K562 (cell line): ENCODE measurements at regions of chr11 and their contacts with region 1.

Region 1: DNA sequence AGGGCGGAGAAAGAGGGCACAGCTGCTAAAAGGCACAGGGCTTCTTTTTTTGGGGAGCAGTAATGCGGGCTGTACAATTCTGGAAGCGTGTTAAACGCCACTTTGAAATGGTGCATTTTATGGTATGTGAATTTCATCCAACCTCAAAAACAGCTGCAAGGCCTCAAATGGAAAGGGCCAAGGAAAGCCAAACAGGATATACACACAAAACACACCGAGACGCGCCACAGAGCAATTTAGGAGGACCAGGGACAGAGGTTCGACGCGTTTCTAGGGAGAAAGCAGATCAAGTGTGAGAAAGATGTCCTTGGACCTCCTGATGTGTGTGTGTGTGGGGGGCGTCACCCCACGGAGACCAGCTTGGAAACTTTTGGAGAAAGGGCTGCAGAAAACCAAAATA is 31.1 kb downstream of the TSPAN4 start:
- DNase-seq: no peak
- ATAC-seq: no peak
- H3K4me3 ChIP-seq: no peak overlapping the region
- H3K27ac ChIP-seq: no peak overlapping the region
- H3K4me1 ChIP-seq: peaks cover 29 to 77% of the 10 kb centered on the region in 2 experiments; a peak in 4 of 5 replicates
- H3K27me3 ChIP-seq: no peaks in the 10 kb centered on the region
- CTCF ChIP-seq: no peak
- EP300 ChIP-seq: no peak
- POLR2A ChIP-seq: no peak
- RAD21 ChIP-seq: no peak

Region 2: GRCh38 chr11:832321-833113 is 41.2 kb before region 1 on chr11 and contains the start of gene CD151:
- CTCF ChIA-PET with region 1: no interaction called
- POLR2A ChIA-PET with region 1: no interaction called
- in situ Hi-C with region 1: no loop called
- intact Hi-C with region 1: no loop called
- DNase-seq: peak; percentile 73 to 84 (median 78)
- ATAC-seq: peak; percentile 76
- H3K4me3 ChIP-seq: peak within 1 kb of the TSS; percentile 87
- H3K27ac ChIP-seq: peak within 1 kb of the TSS; percentile 94
- H3K4me1 ChIP-seq: peaks cover 24 to 91% of the 10 kb centered on the region in 2 experiments
- H3K27me3 ChIP-seq: no peaks in the 10 kb centered on the region
- CTCF ChIP-seq: no peak
- EP300 ChIP-seq: no peak
- POLR2A ChIP-seq: peak; percentile 57
- RAD21 ChIP-seq: no peak
- polyA plus RNA-seq, gene CD151: 2.3 to 6.5 TPM

Region 3: GRCh38 chr11:859509-860131 is 14.1 kb before region 1 on chr11:
- CTCF ChIA-PET with region 1: no interaction called
- POLR2A ChIA-PET with region 1: interaction called, 13 read pairs
- in situ Hi-C with region 1: no loop called
- intact Hi-C with region 1: no loop called
- DNase-seq: peak; percentile 55 to 70 (median 60)
- ATAC-seq: peak; percentile 53
- H3K4me3 ChIP-seq: no peak overlapping the region
- H3K27ac ChIP-seq: no peak overlapping the region
- H3K4me1 ChIP-seq: peaks cover 14 to 95% of the 10 kb centered on the region in 2 experiments
- H3K27me3 ChIP-seq: no peaks in the 10 kb centered on the region
- CTCF ChIP-seq: no peak
- EP300 ChIP-seq: no peak
- POLR2A ChIP-seq: no peak
- RAD21 ChIP-seq: no peak

Region 4: GRCh38 chr11:1181867-1182535 is 308.3 kb after region 1 on chr11:
- CTCF ChIA-PET with region 1: no interaction called
- POLR2A ChIA-PET with region 1: no interaction called
- in situ Hi-C with region 1: no loop called
- intact Hi-C with region 1: no loop called
- DNase-seq: no peak
- ATAC-seq: no peak
- H3K4me3 ChIP-seq: no peak overlapping the region
- H3K27ac ChIP-seq: no peak overlapping the region
- H3K4me1 ChIP-seq: peaks cover 0 to 18% of the 10 kb centered on the region in 2 experiments; a peak in 1 of 5 replicates
- H3K27me3 ChIP-seq: peaks cover 0 to 22% of the 10 kb centered on the region in 2 experiments; a peak in 2 of 5 replicates
- CTCF ChIP-seq: no peak
- EP300 ChIP-seq: no peak
- POLR2A ChIP-seq: no peak
- RAD21 ChIP-seq: no peak